ENCODE measurements at regions of chr22 and their contacts with region 1.

Region 1: GRCh38 chr22:30289134-30289979 is at the start of gene CASTOR1:
- DNase-seq: peak; percentile 84
- ATAC-seq: peak; percentile 87
- H3K4me3 ChIP-seq: peak within 1 kb of the TSS; percentile 60 to 74
- H3K27ac ChIP-seq: peak within 1 kb of the TSS; percentile 59
- H3K4me1 ChIP-seq: peaks cover 25% of the 10 kb centered on the region
- H3K27me3 ChIP-seq: no peaks in the 10 kb centered on the region
- CTCF ChIP-seq: no peak
- total RNA-seq, gene CASTOR1: 6.7 TPM

Region 2: GRCh38 chr22:30326706-30327362 is 37.5 kb after region 1 on chr22 and contains the start of gene TBC1D10A:
- CTCF ChIA-PET with region 1: interaction called, 11 read pairs
- POLR2A ChIA-PET with region 1: no interaction called
- in situ Hi-C with region 1: no loop called
- intact Hi-C with region 1: no loop called
- DNase-seq: no peak
- ATAC-seq: peak; percentile 92
- H3K4me3 ChIP-seq: peak within 1 kb of the TSS; percentile 60 to 61
- H3K27ac ChIP-seq: peak within 1 kb of the TSS; percentile 72
- H3K4me1 ChIP-seq: peaks cover 16% of the 10 kb centered on the region
- H3K27me3 ChIP-seq: no peaks in the 10 kb centered on the region
- CTCF ChIP-seq: no peak
- total RNA-seq, gene TBC1D10A: 14.9 TPM

Region 3: DNA sequence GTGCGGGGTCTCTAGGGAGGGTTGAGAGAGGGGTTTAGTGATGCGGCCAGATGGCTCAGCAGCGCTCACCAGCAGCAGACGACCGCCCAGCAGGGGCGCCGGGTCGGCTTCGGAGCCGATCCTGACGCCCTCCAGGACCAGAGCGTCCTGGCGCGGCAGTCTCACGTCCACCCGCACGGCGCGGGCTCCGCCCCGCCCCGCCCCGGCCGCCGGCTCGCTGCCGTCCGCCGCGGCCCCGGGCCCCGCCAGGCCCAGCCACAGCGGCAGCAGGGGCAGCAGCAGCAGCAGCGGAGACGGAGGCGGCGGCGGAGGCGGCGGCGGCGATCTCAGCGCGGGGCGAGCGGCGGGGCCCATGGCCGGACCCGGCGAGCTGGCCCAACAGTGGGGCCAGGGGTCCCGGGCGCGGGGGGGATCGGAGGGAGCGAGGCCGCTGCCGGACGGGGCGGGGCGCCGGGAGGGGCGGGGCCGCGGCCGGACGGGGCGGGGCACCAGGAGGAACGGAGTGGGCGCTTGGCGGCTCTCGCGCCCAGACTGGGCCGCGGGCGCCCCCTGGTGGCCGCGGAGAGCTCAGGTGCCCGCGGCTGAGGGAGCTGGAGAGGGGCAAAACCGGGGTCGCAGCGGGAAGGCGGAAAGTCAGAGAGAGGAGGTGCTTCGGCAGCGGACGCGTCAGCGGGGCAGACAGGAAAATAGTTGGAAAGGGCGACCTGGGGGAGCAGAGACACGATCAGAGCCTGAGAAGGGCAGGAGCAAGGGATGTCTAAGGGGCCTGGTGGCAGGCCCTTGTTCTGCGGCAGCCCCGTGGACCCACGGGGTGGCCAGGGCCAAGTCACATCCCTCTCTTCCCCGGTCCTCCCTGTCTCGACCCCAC is 97.8 kb after region 1 on chr22 and contains the start of gene RNF215:
- CTCF ChIA-PET with region 1: interaction called, 12 read pairs
- POLR2A ChIA-PET with region 1: no interaction called
- in situ Hi-C with region 1: no loop called
- intact Hi-C with region 1: loop called (anchors 5 kb)
- DNase-seq: no peak
- ATAC-seq: peak; percentile 95
- H3K4me3 ChIP-seq: peak within 1 kb of the TSS; percentile 49 to 60
- H3K27ac ChIP-seq: peak within 1 kb of the TSS; percentile 79
- H3K4me1 ChIP-seq: peaks cover 6% of the 10 kb centered on the region; the same call in 1 of the 2 replicates
- H3K27me3 ChIP-seq: no peaks in the 10 kb centered on the region
- CTCF ChIP-seq: peak; percentile 95
- total RNA-seq, gene RNF215: 35.8 TPM

Measured in Panc1 (cell line).